ENCODE measurements at regions of chr10 and their contacts with region 1.

Region 1: DNA sequence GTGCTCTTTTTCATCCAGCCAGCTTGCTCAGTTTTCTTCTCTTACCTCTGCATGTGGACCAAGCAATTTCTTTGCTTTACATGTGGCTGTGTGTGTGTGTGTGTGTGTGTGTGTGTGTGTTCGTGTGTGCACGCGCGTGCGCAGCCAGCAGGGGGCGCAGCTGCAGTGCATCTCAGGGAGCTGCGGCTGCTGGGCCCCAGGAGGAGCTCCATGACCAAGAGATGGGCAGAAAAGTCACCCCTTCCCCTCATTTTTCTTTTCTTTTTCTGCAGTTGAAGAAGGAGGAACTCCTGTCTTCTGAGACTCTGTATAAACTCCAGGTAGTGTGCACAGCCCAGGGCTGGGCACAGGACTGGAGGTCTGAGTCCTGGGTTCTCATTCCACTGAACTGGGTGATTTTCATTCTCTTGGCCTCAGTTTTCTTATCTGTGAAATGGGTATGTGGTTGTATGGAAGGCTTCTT is 41.8 kb downstream of the BLNK start:
- DNase-seq: peak; percentile 71
- H3K4me3 Mint-ChIP-seq: no peak overlapping the region
- H3K27ac Mint-ChIP-seq: no peak overlapping the region
- H3K4me1 Mint-ChIP-seq: no peaks in the 10 kb centered on the region
- H3K27me3 Mint-ChIP-seq: no peaks in the 10 kb centered on the region
- CTCF ChIP-seq: peak; percentile 73

Region 2: DNA sequence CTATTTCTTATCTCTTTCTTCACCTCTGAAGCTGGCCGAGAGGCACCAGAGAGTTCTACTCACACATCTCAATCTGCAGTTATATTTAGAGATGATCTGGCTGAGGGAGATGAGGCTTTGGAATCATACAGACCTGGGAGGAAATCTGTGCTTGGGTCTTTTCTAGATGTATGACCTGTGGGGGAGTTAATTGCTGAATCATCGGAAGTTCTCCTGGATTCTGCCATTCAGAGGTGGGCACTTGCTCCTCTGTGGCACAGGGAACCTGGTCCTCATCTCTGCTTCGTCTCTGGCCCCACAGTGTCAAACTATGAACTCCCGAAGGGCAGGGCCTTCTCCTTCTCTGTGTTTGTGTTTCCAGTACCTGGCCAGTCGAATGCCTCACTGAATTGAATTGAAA is 10.8 kb before region 1 on chr10:
- CTCF ChIA-PET with region 1: interaction called, 11 read pairs
- POLR2A ChIA-PET with region 1: no interaction called
- intact Hi-C with region 1: no loop called
- DNase-seq: no peak
- H3K4me3 Mint-ChIP-seq: no peak overlapping the region
- H3K27ac Mint-ChIP-seq: no peak overlapping the region
- H3K4me1 Mint-ChIP-seq: no peaks in the 10 kb centered on the region
- H3K27me3 Mint-ChIP-seq: no peaks in the 10 kb centered on the region
- CTCF ChIP-seq: no peak

Region 3: DNA sequence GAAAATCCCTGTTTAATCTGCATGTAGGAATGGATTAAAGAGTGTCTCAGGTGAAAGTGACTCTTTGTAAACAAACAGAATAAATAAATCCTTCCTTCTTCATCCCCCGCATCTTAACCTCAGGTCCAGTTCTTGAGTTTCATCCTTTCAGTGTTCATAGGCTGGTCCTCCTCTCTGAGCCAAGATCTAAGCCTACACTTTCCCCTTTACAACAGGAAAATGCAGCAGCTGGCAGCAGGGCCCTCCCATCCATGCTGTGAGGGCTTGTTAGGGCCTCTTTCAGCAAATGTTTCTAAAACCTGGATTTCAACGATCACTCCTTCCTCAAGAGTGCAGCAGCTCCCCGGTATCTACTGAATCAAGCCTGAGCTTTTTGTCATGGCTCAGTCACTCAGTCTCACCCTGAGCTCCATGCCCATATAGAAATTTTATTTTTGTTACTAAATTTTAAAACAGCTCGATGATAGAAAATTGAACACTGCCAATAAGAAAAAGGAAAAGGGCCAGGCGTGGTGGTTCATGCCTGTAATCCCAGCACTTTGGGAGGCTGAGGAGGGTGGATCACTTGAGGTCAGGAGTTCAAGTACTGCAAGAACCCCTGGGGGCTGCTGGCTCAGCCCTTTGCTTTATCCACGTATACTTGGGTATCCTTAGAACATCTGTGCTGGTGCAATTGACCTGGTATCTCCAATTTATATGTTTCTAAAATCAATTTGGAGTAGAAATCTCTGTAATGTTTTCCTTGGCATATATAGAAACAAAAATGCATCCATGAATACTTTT is 26.1 kb after region 1 on chr10:
- CTCF ChIA-PET with region 1: interaction called, 20 read pairs
- POLR2A ChIA-PET with region 1: no interaction called
- intact Hi-C with region 1: no loop called
- DNase-seq: no peak
- H3K4me3 Mint-ChIP-seq: no peak overlapping the region
- H3K27ac Mint-ChIP-seq: no peak overlapping the region
- H3K4me1 Mint-ChIP-seq: no peaks in the 10 kb centered on the region
- H3K27me3 Mint-ChIP-seq: no peaks in the 10 kb centered on the region
- CTCF ChIP-seq: no peak

Region 4: DNA sequence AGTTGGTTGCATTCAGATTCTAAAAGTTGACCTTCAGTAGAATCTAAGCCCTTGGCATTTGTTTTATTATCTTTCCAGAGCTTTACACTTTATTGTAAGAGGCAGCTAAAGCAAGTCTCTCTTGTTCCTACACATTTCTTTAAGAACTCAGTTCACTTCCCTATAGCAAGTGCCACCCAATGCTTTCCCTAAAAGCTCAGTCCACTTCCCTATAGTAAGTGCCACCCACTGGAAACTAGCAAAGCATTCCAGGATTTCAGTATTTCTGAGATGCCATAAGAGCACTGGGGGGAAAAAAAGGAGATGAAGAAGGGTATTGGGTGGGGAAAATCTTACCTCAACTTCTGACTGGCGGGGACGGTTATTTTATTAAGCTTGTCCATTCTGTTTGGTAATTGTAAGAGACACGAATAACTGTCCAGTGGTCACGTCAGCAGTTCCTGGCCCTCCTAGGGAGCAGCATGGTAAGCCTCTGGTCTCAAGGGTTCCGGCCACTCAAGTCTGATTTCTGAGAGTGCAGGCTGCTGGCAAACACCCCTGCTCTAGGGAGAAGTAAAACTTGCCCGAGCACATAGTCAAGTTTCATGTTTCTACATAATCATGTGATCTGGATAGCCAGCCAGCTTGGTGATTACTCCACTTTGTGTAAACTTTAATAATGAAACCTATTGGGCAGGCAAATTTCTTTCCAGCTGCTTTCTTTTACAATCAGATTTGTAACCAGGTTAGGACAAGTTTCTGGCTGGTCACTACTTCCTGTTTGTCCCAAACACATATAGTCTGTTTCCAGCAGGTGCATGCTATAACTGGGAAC is 41.6 kb after region 1 on chr10 and contains the start of gene BLNK:
- CTCF ChIA-PET with region 1: interaction called, 27 read pairs
- POLR2A ChIA-PET with region 1: interaction called, 5 read pairs
- intact Hi-C with region 1: no loop called
- DNase-seq: peak; percentile 79
- H3K4me3 Mint-ChIP-seq: peak within 1 kb of the TSS; percentile 74
- H3K27ac Mint-ChIP-seq: peak within 1 kb of the TSS; percentile 82
- H3K4me1 Mint-ChIP-seq: peaks cover 24% of the 10 kb centered on the region
- H3K27me3 Mint-ChIP-seq: no peaks in the 10 kb centered on the region
- CTCF ChIP-seq: no peak
- total RNA-seq, gene BLNK: 1.0 and 1.1 TPM in 2 replicates

Region 5: DNA sequence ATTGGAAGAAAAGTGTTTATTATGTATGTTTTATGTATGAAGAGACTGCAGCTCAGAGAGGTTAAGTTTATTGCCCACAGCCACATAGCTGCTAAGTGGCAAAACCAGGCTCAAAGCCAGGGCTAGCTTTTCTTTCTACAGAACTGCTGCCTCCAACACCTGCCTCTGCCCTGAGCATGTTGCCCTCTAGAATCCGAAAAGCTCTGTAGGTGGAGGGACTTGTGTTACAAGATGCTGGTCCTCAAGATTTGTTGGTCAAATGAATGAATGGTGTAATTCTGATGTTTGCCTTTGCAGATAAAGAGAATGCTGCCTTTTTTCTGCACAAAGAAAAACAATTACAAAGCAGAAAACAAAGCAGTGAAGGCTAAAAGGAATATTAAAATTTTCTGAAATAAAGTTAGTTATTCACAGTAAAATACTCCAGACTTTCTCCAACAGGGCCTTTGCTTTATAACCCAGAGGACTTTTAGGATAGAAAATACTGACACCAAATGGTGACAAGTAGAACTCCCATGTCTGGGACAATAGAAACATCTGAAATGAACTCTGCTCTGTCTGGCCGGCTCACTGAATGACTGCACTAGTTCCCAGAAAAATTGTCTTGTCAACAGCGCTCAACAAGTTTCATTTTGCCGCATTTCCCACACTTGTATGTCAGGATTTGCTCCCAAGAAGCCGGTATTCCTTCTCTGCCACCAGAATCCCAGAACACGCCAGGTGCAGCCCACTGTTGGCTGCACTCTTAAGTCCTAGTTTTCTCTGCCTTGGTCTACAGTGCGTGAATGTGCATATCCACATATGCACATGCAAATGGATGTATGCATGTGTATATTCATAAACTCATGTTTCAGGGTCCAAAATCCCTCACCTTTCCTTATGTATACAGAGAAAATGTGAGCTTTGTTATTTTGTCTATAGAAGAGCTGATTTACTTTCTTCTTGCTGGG is 63.6 kb after region 1 on chr10:
- CTCF ChIA-PET with region 1: interaction called, 250 read pairs
- POLR2A ChIA-PET with region 1: interaction called, 6 read pairs
- intact Hi-C with region 1: loop called (anchors 1 kb)
- DNase-seq: peak; percentile 61
- H3K4me3 Mint-ChIP-seq: no peak overlapping the region
- H3K27ac Mint-ChIP-seq: no peak overlapping the region
- H3K4me1 Mint-ChIP-seq: no peaks in the 10 kb centered on the region
- H3K27me3 Mint-ChIP-seq: peaks cover 8% of the 10 kb centered on the region
- CTCF ChIP-seq: peak; percentile 43

Region 6: DNA sequence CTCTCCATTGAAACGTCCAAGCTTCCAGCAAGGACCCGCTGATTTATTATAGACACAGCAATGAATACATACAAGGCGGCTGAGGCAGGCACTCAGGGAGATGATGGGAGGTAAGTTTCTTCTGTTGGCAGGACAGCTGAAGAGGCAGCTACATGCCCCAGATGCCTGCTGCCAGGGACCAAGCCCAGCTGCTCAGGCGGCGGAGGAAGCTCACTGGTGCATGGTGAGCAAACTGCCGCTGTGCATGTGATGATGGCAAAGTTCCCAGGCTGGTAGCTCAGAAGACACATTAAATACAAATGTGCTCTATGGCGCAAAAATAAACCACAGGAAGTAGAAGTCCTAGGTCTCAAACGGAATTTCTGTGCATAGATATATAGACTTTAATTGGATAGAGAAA is 76.9 kb after region 1 on chr10:
- CTCF ChIA-PET with region 1: interaction called, 23 read pairs
- POLR2A ChIA-PET with region 1: no interaction called
- intact Hi-C with region 1: no loop called
- DNase-seq: no peak
- H3K4me3 Mint-ChIP-seq: no peak overlapping the region
- H3K27ac Mint-ChIP-seq: no peak overlapping the region
- H3K4me1 Mint-ChIP-seq: no peaks in the 10 kb centered on the region
- H3K27me3 Mint-ChIP-seq: peaks cover 13% of the 10 kb centered on the region
- CTCF ChIP-seq: no peak

Region 7: DNA sequence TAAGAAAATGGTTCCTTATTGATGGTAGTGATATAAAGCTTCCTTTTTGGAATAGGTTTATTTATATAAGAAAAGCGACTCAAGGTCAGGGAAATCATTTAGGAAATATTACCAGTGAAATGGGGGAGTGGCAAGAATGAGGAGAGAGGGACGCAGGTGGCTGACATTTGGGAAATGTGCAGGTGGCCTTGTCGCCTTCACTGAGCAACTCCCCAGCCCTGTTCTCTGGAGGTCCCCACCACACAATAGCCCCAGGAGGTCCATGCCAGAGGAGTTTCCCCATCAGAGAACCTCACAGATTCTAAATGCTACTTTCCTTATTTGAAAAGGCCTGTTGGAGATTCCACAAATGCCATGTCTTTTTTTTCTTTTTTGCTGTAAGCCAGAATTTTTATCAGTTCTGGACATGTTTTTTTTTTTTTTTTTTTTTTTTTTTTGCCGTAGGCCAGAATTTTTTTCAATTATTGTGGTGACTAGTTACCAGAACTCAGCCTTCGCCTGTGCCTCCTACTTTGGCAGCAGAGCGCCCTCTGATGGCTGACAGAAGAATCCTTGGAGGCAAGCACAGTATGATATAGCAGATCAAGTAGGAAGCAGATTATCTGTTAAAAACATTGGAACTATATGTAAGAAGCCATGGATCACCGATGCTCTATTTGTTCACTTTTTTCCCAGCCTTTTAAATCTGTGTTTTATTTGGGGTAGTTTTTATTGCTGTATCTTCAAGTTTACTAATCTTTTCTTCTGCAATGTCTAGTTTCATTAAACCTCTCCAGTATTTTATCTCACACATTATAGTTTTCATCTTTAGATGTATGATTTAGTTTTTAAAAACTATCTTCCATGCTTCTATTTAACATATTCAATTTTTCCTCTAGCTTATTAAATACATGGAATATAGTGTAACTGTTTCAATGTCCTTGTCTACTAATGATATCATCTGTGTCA is 110.6 kb after region 1 on chr10:
- CTCF ChIA-PET with region 1: interaction called, 12 read pairs
- POLR2A ChIA-PET with region 1: no interaction called
- intact Hi-C with region 1: no loop called
- DNase-seq: peak; percentile 75
- H3K4me3 Mint-ChIP-seq: no peak overlapping the region
- H3K27ac Mint-ChIP-seq: no peak overlapping the region
- H3K4me1 Mint-ChIP-seq: no peaks in the 10 kb centered on the region
- H3K27me3 Mint-ChIP-seq: peaks cover 12% of the 10 kb centered on the region
- CTCF ChIP-seq: peak; percentile 83